ENCODE measurements at regions of chr2 and their contacts with region 1.

Region 1: GRCh38 chr2:23809150-23809549 is 117.8 kb downstream of the ATAD2B start:
- DNase-seq: no peak
- H3K4me3 ChIP-seq: no peak overlapping the region
- H3K27ac ChIP-seq: no peak overlapping the region
- H3K4me1 ChIP-seq: no peaks in the 10 kb centered on the region
- H3K27me3 ChIP-seq: no peaks in the 10 kb centered on the region
- CTCF ChIP-seq: no peak
- EP300 ChIP-seq: no peak
- POLR2A ChIP-seq: no peak

Region 2: DNA sequence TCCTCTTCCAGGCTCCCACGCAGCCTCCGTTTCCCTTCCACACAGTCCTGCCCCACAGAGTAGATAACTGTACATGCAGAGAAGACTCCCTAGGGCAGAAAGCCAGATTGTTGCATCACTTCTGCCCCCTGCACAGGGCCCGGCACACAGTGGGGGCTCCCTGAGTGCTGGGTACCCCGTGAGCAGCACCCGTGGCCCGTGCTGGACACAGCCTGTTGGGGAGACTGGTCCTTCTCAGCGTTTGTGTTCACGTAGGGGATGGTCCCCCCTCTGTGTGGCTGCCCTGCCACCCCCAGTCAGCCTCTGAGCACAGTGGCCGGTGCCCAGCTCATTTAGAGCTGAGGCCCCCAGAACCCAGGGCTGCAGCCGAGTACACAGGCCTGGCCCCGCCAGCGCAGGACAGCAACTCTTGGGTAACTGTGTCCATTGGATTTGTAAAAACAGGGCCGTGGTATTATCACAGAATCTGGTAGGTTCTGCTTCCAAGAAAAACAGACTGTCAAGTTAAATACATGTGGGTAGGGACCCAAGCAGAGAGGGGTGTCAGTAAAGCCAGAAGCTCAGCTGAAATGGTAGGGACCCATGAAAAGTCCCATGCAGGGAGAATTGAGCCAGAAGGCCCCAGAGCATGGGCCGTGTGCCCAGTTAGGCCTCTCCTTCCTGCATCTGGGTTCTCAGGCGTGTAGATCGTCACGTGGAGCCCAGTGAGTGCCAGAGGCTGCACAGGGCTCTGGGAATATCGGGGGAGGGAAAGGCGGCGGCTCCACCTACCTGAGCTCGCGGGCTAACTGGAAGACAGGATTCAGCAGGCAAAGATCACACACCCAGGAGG is 139.5 kb before region 1 on chr2:
- intact Hi-C with region 1: loop called in 1 of 4 experiments (anchors 5 kb)
- DNase-seq: peak; percentile 81 to 90 (median 89)
- H3K4me3 ChIP-seq: no peak overlapping the region
- H3K27ac ChIP-seq: peak overlapping the region in 1 of 2 donors; percentile 45
- H3K4me1 ChIP-seq: peaks cover 9% of the 10 kb centered on the region
- H3K27me3 ChIP-seq: no peaks in the 10 kb centered on the region
- CTCF ChIP-seq: no peak
- EP300 ChIP-seq: no peak
- POLR2A ChIP-seq: no peak

Region 3: GRCh38 chr2:23698721-23699492 is 110.2 kb before region 1 on chr2:
- intact Hi-C with region 1: no loop called
- DNase-seq: no peak
- H3K4me3 ChIP-seq: no peak overlapping the region
- H3K27ac ChIP-seq: no peak overlapping the region
- H3K4me1 ChIP-seq: no peaks in the 10 kb centered on the region
- H3K27me3 ChIP-seq: no peaks in the 10 kb centered on the region
- CTCF ChIP-seq: no peak
- EP300 ChIP-seq: no peak
- POLR2A ChIP-seq: no peak

Region 4: DNA sequence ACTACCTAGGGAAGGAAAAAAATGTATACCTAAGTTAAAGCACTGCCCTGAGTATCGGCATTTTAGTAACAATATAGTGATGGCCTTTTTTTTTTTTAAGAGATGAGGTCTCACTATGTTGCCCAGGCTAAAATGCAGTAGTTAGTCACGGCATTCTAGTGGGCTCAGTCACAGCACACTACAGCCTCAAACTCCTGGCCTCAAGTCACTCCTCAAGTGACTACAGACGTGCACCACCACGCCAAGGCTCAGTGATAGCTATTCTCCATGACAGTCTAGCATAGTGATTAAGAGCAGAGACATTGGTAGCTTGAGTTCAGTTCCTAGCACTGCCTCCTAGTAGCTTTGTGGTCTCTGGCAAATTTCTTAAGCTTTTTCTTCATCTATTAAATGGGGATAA is 158.7 kb after region 1 on chr2:
- intact Hi-C with region 1: no loop called
- DNase-seq: no peak
- H3K4me3 ChIP-seq: no peak overlapping the region
- H3K27ac ChIP-seq: no peak overlapping the region
- H3K4me1 ChIP-seq: no peaks in the 10 kb centered on the region
- H3K27me3 ChIP-seq: no peaks in the 10 kb centered on the region
- CTCF ChIP-seq: no peak
- EP300 ChIP-seq: no peak
- POLR2A ChIP-seq: no peak

Measured in ovary (tissue), 10 donors.